PC-3 (cell line): ENCODE measurements at regions of chr2 and their contacts with region 1.

Region 1: GRCh38 chr2:139031722-139032121 is 251.5 kb upstream of the NXPH2 start:
- DNase-seq: peak; percentile 78
- ATAC-seq: peak; percentile 86
- H3K4me3 ChIP-seq: no peak overlapping the region
- H3K27ac ChIP-seq: peak overlapping the region; percentile 52
- H3K4me1 ChIP-seq: peaks cover 26% of the 10 kb centered on the region
- H3K27me3 ChIP-seq: no peaks in the 10 kb centered on the region
- CTCF ChIP-seq: peak; percentile 57

Region 2: GRCh38 chr2:138846223-138846821 is 185.4 kb before region 1 on chr2:
- CTCF ChIA-PET with region 1: no interaction called
- POLR2A ChIA-PET with region 1: no interaction called
- intact Hi-C with region 1: loop called (anchors 2 kb)
- DNase-seq: peak; percentile 73
- ATAC-seq: peak; percentile 92
- H3K4me3 ChIP-seq: no peak overlapping the region
- H3K27ac ChIP-seq: no peak overlapping the region
- H3K4me1 ChIP-seq: no peaks in the 10 kb centered on the region
- H3K27me3 ChIP-seq: no peaks in the 10 kb centered on the region
- CTCF ChIP-seq: peak; percentile 93

Region 3: DNA sequence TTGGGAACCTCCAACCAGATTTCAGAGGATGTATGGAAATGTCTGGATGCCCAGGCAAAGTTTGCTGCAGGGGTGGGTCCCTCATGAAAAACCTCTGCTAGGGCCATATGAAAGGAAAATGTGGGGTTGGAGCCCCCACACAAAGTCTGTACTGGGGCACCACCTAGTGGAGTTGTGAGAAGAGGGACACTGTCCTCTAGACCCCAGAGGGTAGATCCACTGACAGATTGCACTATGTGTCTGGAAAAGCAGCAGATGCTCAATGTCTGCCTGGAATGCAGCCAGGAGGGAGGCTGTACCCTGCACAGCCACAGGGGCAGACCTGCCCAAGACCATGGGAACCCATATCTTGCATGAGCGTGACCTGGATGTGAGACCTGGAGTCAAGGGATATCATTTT is 322.2 kb after region 1 on chr2:
- CTCF ChIA-PET with region 1: no interaction called
- POLR2A ChIA-PET with region 1: no interaction called
- intact Hi-C with region 1: loop called (anchors 10 kb)
- DNase-seq: no peak
- ATAC-seq: no peak
- H3K4me3 ChIP-seq: no peak overlapping the region
- H3K27ac ChIP-seq: no peak overlapping the region
- H3K4me1 ChIP-seq: no peaks in the 10 kb centered on the region
- H3K27me3 ChIP-seq: no peaks in the 10 kb centered on the region
- CTCF ChIP-seq: no peak